ENCODE measurements at regions of chr1 and their contacts with region 1.

Region 1: DNA sequence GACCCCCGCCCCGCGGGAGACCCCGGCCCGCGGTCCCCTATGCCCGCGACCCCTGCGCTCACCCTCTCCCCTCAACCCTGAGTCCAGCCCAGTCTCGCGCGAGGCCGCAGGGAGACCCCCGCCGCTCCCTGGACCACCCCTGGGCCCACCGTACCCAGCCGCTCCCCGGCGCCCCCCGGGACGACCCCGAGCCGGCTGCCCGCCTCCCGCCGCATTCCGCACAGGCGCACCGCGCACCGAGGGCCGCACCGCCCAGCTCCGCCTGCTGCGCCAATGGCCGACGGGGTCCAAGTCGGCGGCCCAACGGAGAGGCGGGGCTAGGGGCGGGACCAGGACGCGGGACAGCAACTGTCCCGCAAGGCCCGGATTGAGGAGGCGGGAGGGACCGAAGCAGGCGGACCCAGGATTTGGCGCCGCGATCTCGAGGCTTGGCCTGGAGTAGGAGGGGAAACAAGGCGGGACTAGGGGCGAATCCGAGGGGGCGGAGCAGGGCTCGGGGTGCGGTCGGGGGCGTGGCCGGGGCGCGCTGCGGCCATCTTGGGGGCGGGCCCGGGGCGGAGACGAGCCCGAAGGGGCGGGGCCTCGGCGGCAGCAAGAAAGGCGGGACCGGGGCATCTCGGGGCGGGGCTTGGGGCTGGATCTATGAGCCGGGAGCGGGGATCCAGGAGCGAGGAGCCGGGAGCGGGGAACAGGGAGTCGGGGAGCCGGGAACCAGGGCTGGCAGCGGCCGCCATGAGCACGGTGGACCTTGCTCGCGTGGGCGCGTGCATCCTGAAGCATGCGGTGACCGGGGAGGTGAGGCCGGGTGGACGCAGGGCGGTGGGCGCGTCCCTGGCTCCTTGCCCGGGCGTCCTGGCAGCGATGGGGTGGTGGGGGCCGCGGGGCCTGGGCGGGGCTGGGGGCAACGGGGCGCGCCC is at the start of gene PRXL2B:
- DNase-seq: peak; percentile 99
- H3K4me3 ChIP-seq: peak within 1 kb of the TSS; percentile 87 to 88
- H3K27ac ChIP-seq: peak within 1 kb of the TSS; percentile 97 to 99
- H3K4me1 ChIP-seq: peaks cover 21% of the 10 kb centered on the region
- H3K27me3 ChIP-seq: no peaks in the 10 kb centered on the region
- CTCF ChIP-seq: peak in 2 of 4 experiments; percentile 30 to 38
- POLR2A ChIP-seq: peak; percentile 98
- total RNA-seq, gene PRXL2B: 20.3 to 25.8 TPM

Region 2: DNA sequence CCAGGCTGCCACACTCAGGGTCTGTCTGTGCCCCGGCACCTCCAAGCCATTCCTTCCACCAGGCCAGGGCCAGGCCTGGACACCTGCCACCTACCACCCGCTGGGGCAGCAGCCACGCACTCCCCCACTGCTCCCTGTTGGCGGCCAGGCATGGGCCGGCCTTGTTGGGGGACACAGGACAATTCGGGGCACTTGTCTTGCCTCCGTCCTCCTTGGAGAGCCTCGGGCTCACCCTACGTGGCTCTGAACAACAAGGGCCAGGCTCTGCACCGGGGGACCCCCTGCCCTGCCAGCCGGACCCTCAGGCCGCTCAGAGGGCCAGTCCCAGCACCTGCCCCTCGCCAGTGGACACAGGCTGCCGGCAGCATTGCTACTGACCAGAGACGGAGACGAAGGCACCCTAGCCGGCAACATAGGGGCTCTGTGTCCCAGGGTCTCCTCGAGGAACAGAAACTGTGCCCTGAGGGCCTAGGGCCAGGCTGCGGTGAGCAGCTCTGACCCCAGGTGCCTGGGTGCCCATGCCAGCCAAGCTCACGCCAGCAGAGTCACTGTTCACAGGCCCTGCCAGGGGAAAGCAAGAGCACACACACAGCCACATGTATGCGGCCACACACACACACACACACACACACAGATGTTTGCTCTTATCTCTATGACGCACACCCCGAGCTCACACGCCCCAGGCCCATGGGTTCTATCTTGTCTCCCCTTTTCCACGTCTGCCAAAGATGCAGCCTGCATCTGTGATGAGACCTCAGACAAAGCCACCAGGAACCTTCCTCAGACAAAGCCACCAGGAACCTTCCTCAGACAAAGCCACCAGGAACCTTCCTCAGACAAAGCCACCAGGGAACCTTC is 241.0 kb before region 1 on chr1:
- intact Hi-C with region 1: no loop called
- DNase-seq: no peak
- H3K4me3 ChIP-seq: no peak overlapping the region
- H3K27ac ChIP-seq: no peak overlapping the region
- H3K4me1 ChIP-seq: no peaks in the 10 kb centered on the region
- H3K27me3 ChIP-seq: no peaks in the 10 kb centered on the region
- CTCF ChIP-seq: no peak
- POLR2A ChIP-seq: no peak

Region 3: DNA sequence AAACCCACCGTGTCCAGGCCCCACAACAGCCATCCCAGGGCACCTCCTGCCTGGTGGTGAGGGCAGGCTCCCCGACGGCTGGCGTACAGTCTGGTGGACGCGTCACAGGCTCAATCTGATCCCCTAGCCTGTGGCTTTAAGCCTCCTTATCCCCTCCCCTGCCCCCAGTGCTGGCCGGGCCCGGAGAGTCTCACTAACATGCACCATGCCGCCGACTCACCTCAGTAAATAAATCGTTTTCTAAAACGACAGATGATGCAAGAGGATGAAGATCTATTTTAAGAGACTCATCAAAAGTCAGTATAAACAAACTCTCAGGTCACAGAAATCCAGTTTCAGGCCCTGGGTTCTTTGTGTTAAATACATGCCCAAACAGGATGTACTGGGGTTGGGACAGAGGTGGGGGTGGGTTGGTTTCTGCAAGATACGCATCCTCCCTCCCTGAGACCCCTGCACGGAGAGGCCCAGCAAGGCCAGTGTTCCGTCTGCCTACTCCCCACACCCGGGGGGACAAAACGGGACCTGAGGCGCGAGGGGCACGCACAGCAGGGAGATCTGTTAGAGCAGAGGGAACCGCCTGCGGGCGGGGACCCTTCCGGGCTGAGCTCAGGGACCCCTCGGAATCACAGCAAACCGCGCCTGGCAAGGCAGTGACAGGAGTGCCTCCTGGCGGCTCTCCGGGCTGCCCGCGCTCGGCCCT is 63.1 kb before region 1 on chr1:
- intact Hi-C with region 1: no loop called
- DNase-seq: no peak
- H3K4me3 ChIP-seq: no peak overlapping the region
- H3K27ac ChIP-seq: no peak overlapping the region
- H3K4me1 ChIP-seq: peaks cover 11% of the 10 kb centered on the region
- H3K27me3 ChIP-seq: no peaks in the 10 kb centered on the region
- CTCF ChIP-seq: peak in 1 of 4 experiments; percentile 9
- POLR2A ChIP-seq: no peak

Region 4: GRCh38 chr1:2642560-2643413 is 56.4 kb after region 1 on chr1:
- intact Hi-C with region 1: loop called (anchors 5 kb)
- DNase-seq: peak; percentile 87
- H3K4me3 ChIP-seq: peak overlapping the region; percentile 75 to 77
- H3K27ac ChIP-seq: peak overlapping the region; percentile 69 to 84
- H3K4me1 ChIP-seq: peaks cover 5% of the 10 kb centered on the region
- H3K27me3 ChIP-seq: no peaks in the 10 kb centered on the region
- CTCF ChIP-seq: peak in 2 of 4 experiments; percentile 41 to 48
- POLR2A ChIP-seq: peak; percentile 86